Activated naive CD4-positive, alpha-beta T cell treated with anti-CD3 and anti-CD28 coated beads for 36 hours (primary cell): ENCODE measurements at regions of chr14 and their contacts with region 1.

Region 1: GRCh38 chr14:54730156-54730961 is 163.4 kb downstream of the SAMD4A start:
- DNase-seq: peak; percentile 74
- H3K4me3 Mint-ChIP-seq: peak overlapping the region; percentile 58
- H3K27ac Mint-ChIP-seq: peak overlapping the region; percentile 96
- H3K4me1 Mint-ChIP-seq: peaks cover 33% of the 10 kb centered on the region
- H3K27me3 Mint-ChIP-seq: peaks cover 3% of the 10 kb centered on the region

Region 2: GRCh38 chr14:54440873-54441868 is 289.2 kb before region 1 on chr14 and contains the start of gene CNIH1:
- CTCF ChIA-PET with region 1: no interaction called
- intact Hi-C with region 1: loop called (anchors 2 kb)
- DNase-seq: peak; percentile 93
- H3K4me3 Mint-ChIP-seq: peak within 1 kb of the TSS; percentile 87
- H3K27ac Mint-ChIP-seq: peak within 1 kb of the TSS; percentile 97
- H3K4me1 Mint-ChIP-seq: peaks cover 48% of the 10 kb centered on the region
- H3K27me3 Mint-ChIP-seq: no peaks in the 10 kb centered on the region
- total RNA-seq, gene CNIH1: 68.1 to 78.4 TPM

Region 3: DNA sequence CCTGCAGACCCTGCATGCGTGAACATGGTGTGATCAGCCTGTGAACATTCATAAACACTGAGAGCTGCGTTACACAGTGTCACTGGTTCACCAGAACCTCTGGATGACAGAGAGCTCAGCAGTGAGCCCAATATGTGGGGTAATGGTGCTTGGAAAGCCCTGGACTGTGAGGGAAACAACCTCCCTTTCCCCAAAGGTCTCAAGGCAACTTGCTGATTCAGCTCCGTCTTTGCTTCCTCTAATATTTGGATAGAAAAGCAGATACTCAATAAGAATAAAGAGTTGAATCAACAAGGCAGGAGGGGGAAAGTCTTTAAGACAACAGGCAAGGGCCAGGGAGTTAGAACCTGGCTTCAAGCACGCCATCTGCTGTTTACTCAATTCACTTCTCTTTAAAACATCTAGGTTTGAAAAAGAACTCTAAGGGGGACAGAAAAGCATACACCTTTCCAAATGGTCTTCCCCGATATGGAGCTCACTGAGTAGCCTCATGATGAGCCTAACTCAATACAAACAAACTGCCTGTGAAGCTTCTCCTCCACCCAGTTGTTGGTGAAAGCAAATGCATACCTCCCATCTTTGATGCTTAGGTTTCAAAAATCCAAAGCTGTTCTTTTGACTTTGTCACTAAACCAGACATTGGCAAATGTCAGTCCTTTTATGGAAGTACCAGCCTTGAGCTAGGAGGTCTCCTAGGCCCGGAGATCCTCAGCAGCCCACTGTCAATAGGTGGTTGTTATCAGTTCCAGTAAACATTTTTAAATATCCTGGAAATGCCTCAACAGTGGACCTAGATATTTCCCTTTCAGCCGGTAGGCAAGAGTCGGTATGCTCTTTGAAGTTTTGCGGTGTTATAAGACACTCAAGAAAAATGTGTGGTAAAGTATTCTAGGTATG is 87.3 kb before region 1 on chr14:
- CTCF ChIA-PET with region 1: no interaction called
- intact Hi-C with region 1: loop called (anchors 2 kb)
- DNase-seq: peak; percentile 28
- H3K4me3 Mint-ChIP-seq: no peak overlapping the region
- H3K27ac Mint-ChIP-seq: no peak overlapping the region
- H3K4me1 Mint-ChIP-seq: peaks cover 19% of the 10 kb centered on the region
- H3K27me3 Mint-ChIP-seq: no peaks in the 10 kb centered on the region

Region 4: GRCh38 chr14:54742492-54743350 is 12.4 kb after region 1 on chr14:
- CTCF ChIA-PET with region 1: no interaction called
- intact Hi-C with region 1: loop called (anchors 1 kb)
- DNase-seq: no peak
- H3K4me3 Mint-ChIP-seq: no peak overlapping the region
- H3K27ac Mint-ChIP-seq: no peak overlapping the region
- H3K4me1 Mint-ChIP-seq: peaks cover 35% of the 10 kb centered on the region
- H3K27me3 Mint-ChIP-seq: no peaks in the 10 kb centered on the region

Region 5: GRCh38 chr14:54881235-54881760 is 150.9 kb after region 1 on chr14:
- CTCF ChIA-PET with region 1: no interaction called
- intact Hi-C with region 1: loop called (anchors 1 kb)
- DNase-seq: peak; percentile 38
- H3K4me3 Mint-ChIP-seq: peak overlapping the region; percentile 78
- H3K27ac Mint-ChIP-seq: peak overlapping the region; percentile 96
- H3K4me1 Mint-ChIP-seq: peaks cover 34% of the 10 kb centered on the region
- H3K27me3 Mint-ChIP-seq: no peaks in the 10 kb centered on the region